Esophagus muscularis mucosa (tissue), 4 donors: ENCODE measurements at regions of chr6 and their contacts with region 1.

Region 1: GRCh38 chr6:36984581-36985416 is 1.2 kb downstream of the MTCH1 start:
- DNase-seq: no peak
- H3K4me3 ChIP-seq: peak overlapping the region; percentile 89 to 99 (median 96)
- H3K27ac ChIP-seq: peak overlapping the region; percentile 91 to 98 (median 98)
- H3K4me1 ChIP-seq: peaks cover 58 to 66% (median 66%) of the 10 kb centered on the region in 4 donors
- H3K27me3 ChIP-seq: peaks cover 0 to 3% (median 0%) of the 10 kb centered on the region in 4 donors
- CTCF ChIP-seq: no peak
- EP300 ChIP-seq: no peak
- POLR2A ChIP-seq: no peak

Region 2: GRCh38 chr6:36885461-36886401 is 99.1 kb before region 1 on chr6 and contains the start of gene C6orf89:
- intact Hi-C with region 1: loop called (anchors 5 kb)
- DNase-seq: peak; percentile 99
- H3K4me3 ChIP-seq: peak within 1 kb of the TSS; percentile 71 to 88 (median 82)
- H3K27ac ChIP-seq: peak within 1 kb of the TSS; percentile 86 to 89 (median 88)
- H3K4me1 ChIP-seq: peaks cover 18 to 40% (median 36%) of the 10 kb centered on the region in 4 donors
- H3K27me3 ChIP-seq: no peaks in the 10 kb centered on the region
- CTCF ChIP-seq: peak; percentile 88 to 97 (median 90)
- EP300 ChIP-seq: no peak
- POLR2A ChIP-seq: peak; percentile 78
- total RNA-seq, gene C6orf89: 56.5 to 66.2 (median 59.0) TPM

Region 3: DNA sequence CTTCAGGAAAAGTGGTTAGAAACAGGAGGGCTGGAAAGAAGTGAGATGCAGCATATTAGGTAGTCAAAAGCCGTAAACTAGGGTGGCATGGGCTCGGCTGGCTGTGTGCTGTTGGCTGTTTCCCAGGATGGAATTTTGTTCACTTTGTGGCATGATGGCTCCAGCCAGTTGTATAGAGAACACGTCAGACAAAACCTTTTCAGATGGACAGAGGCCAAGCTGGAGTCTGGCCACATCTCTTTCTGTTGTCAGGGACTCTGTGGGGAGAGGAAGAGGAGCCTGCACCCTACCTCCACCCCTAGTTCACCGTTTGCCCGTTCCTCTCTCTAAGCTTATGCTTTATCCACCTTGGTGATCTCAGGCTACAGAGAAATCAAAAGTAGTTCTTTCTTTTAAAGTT is 77.0 kb before region 1 on chr6:
- intact Hi-C with region 1: loop called (anchors 5 kb)
- DNase-seq: no peak
- H3K4me3 ChIP-seq: peak overlapping the region in 1 of 4 donors; percentile 5
- H3K27ac ChIP-seq: peak overlapping the region; percentile 62 to 74 (median 68)
- H3K4me1 ChIP-seq: peaks cover 31 to 44% (median 39%) of the 10 kb centered on the region in 4 donors
- H3K27me3 ChIP-seq: no peaks in the 10 kb centered on the region
- CTCF ChIP-seq: no peak
- EP300 ChIP-seq: no peak
- POLR2A ChIP-seq: no peak